ENCODE measurements at regions of chr5 and their contacts with region 1.

Region 1: GRCh38 chr5:180328296-180329137 is 24.6 kb downstream of the GFPT2 start:
- DNase-seq: peak; percentile 75 to 80
- H3K4me3 ChIP-seq: no peak overlapping the region
- H3K27ac ChIP-seq: no peak overlapping the region
- H3K4me1 ChIP-seq: peaks cover 0 to 3% of the 10 kb centered on the region in 2 donors
- H3K27me3 ChIP-seq: no peaks in the 10 kb centered on the region
- CTCF ChIP-seq: peak; percentile 15 to 75 (median 46)
- POLR2A ChIP-seq: no peak

Region 2: DNA sequence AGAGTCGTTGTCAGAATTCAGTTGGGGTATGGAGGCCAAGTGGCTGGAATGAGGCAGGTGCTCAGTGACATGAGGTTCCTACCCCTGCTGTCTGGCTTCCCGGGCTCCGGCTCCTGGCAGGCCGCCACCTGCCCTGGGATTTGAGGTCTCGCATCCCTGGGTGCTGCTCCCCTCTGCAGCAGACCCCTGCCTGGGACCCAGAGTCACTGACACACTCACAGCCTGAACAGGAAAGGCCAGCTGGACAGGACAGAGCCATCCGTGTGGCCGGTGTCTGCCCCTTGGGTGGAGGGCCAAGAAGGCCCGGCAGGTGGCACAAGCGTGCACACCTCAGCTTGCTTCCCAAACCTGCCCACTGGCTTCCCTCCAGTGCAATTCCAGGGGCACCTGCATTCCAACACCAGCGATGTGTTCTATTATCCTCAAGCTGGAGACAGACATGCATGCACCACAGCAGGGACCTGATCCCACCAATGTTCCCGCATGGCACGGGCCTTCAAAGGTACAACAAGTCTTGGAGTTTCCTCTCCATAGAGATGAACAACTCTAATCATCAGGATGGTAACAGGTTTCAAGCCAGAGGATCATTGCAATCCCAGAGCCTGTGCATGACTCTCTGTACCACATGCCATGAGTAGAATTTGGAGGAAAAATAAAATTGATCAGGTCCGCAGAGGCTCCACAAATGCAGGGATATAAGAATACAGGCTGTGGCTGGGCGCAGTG is 211.4 kb before region 1 on chr5:
- intact Hi-C with region 1: loop called (anchors 10 kb)
- DNase-seq: peak; percentile 71 to 77
- H3K4me3 ChIP-seq: no peak overlapping the region
- H3K27ac ChIP-seq: no peak overlapping the region
- H3K4me1 ChIP-seq: peaks cover 3 to 6% of the 10 kb centered on the region in 2 donors
- H3K27me3 ChIP-seq: no peaks in the 10 kb centered on the region
- CTCF ChIP-seq: peak; percentile 9 to 69 (median 60)
- POLR2A ChIP-seq: no peak

Region 3: DNA sequence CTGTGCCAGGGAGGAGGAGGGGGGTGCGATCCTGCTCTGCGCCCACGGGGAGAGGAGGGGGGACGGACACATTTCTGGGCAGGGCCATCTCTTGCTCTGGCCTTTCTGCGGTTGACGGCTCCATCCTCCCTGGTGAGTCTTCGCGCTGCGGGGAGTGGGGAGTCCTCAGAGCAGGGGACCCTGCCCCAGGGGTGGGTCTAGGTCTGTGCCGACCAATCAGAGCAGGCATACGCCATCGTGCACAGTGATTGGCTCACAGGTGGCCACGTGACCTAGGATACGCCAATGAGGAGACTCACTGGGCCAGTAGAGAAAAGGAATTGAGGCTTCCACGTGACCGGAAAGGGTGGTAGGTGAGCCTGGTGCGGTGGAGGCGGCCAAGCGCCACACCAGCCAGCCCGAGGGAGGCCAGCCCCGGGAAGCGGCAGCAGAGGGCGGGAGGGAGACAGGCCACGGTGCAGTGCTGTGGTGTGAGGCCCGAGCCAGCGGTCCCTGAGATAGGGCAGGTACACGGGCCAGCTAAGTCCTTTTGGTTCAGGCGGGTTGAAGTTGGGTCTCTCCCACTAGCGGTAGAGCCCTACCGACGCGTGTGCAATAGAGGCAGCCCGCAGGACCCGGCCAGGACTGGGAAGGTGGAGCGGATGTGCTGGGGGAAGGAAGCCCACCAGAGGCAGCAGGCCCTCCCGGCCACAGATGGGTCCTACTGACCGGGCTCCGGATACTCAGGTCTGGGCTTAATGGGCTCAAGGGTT is 191.7 kb before region 1 on chr5:
- intact Hi-C with region 1: no loop called
- DNase-seq: no peak
- H3K4me3 ChIP-seq: no peak overlapping the region
- H3K27ac ChIP-seq: no peak overlapping the region
- H3K4me1 ChIP-seq: peaks cover 0 to under 1% of the 10 kb centered on the region in 2 donors
- H3K27me3 ChIP-seq: no peaks in the 10 kb centered on the region
- CTCF ChIP-seq: no peak
- POLR2A ChIP-seq: no peak

Measured in thyroid gland (tissue), 4 donors.